Posterior vena cava (tissue), 2 donors: ENCODE measurements at regions of chr2 and their contacts with region 1.

Region 1: DNA sequence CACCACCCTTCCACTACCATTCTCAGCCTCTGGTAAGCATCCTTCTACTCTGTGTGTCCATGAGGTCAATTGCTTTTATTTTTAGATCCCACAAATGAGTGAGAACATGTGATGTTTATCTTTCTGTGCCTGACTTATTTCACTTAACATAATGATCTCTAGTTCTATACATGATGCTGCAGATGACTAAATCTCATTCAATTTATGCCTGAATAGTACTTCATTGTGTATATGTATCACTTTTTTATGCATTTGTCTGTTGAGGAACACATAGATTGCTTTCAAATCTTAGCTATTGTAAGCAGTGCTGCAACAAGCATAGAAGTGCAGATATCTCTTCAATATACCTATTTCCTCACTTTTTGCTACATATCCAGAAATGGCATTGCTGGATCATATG is 733.3 kb downstream of the SUCLG1 start:
- DNase-seq: no peak

Region 2: GRCh38 chr2:83602753-83603152 is 123.0 kb before region 1 on chr2:
- intact Hi-C with region 1: no loop called
- DNase-seq: no peak

Region 3: DNA sequence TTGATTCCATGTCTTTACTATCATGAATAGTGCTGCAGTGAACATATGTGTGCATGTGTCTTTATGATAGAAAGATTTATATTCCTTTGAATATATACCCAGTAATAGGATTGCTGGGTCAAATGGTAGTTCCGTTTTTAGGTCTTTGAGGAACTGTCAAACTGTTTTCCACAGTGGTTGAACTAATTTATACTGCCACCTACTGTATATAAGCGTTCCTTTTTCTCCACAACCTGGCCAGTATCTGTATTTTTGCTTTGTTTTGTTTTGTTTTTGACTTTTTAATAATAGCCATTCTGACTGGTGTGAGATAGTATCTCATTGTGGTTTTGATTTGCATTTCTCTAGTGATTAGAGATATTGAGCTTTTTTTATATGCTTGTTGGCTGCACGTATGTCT is 91.8 kb after region 1 on chr2:
- intact Hi-C with region 1: no loop called
- DNase-seq: no peak

Region 4: GRCh38 chr2:84417453-84418145 is 691.9 kb after region 1 on chr2:
- intact Hi-C with region 1: loop called in 1 of 2 experiments (anchors 5 kb)
- DNase-seq: no peak